Activated CD4-positive, alpha-beta memory T cell treated with anti-CD3 and anti-CD28 coated beads for 36 hours (primary cell): ENCODE measurements at regions of chr1 and their contacts with region 1.

Region 1: DNA sequence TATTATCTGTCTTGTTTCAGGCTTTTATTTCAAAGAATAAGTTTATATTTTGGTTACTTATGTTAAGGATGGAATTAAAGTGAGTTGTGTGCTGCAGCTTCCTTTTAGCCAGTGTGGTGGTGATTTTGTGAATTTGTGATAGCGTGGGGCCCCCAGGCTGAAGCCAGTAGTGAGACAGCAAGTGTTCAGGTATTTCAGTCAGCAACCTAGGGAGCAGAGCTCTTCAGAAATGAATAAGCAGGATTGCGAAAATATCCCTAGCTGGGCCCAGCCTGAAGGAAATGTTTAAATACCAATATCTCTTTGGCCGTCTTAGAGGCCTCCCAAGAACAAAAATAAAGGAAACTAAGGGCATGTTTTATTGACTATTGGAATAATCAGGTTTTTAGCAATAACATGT is 150.8 kb upstream of the C1orf105 start:
- DNase-seq: peak; percentile 41
- H3K4me3 Mint-ChIP-seq: no peak overlapping the region
- H3K27ac Mint-ChIP-seq: peak overlapping the region; percentile 49
- H3K4me1 Mint-ChIP-seq: peaks cover 48% of the 10 kb centered on the region
- H3K27me3 Mint-ChIP-seq: no peaks in the 10 kb centered on the region

Region 2: DNA sequence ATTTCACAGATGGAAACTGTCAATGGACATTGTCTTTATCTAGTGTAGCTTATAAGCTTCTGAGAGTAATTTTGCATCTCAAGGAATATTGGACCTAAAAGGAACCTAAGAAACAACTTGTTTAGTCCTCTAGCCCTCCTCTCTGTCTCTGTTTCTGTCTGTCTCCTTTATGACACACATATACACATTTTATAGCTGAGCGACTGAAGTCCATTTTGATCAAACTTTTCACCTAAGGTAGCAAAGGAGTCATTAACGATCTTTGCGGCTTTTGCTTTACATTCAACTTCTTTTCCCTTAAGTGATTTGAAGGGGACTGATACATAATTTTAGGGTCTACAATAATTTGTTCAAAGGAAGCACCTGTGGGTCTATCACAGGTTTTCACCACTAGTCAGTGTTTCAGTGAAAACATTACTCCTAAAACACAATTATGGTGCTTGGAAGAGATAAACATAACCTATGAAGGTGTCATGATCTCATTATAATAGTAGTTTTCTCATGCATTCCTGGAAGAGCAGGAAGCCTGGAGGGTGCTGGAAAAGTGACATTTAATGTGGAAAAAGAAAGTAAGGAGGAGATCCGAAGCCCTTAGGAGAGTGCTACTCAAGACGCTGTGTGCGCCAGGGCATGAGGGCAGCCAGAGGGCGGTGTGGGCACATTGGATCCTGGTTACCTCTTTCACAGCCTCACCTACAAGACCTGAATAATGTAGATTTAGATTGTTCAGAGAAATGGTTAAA is 179.7 kb before region 1 on chr1:
- CTCF ChIA-PET with region 1: no interaction called
- POLR2A ChIA-PET with region 1: no interaction called
- intact Hi-C with region 1: loop called (anchors 5 kb)
- DNase-seq: peak; percentile 79
- H3K4me3 Mint-ChIP-seq: no peak overlapping the region
- H3K27ac Mint-ChIP-seq: no peak overlapping the region
- H3K4me1 Mint-ChIP-seq: peaks cover 2% of the 10 kb centered on the region
- H3K27me3 Mint-ChIP-seq: no peaks in the 10 kb centered on the region

Region 3: GRCh38 chr1:172135076-172135672 is 134.5 kb before region 1 on chr1:
- CTCF ChIA-PET with region 1: no interaction called
- POLR2A ChIA-PET with region 1: no interaction called
- intact Hi-C with region 1: loop called (anchors 1 kb)
- DNase-seq: no peak
- H3K4me3 Mint-ChIP-seq: no peak overlapping the region
- H3K27ac Mint-ChIP-seq: peak overlapping the region; percentile 29
- H3K4me1 Mint-ChIP-seq: peaks cover 18% of the 10 kb centered on the region
- H3K27me3 Mint-ChIP-seq: no peaks in the 10 kb centered on the region

Region 4: DNA sequence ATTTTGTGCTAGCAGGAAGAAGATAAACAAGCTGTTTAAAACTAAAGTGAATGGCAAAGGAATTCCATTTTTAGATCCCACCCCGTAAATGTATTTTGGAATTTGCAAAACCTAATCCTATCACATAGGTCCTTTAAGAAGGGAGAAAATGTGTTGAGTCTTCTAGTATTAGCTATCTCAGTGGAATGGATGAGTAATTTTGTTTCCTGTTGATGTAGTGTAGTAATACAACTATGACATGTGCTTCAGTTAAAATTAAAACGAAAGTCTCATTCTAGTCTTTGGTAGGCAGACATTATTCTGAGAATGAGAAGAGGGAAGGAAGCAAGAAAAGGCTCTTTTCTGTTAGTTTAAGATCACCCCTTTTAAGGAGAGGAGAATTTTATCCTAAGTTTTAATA is 115.1 kb before region 1 on chr1:
- CTCF ChIA-PET with region 1: no interaction called
- POLR2A ChIA-PET with region 1: no interaction called
- intact Hi-C with region 1: loop called (anchors 1 kb)
- DNase-seq: no peak
- H3K4me3 Mint-ChIP-seq: no peak overlapping the region
- H3K27ac Mint-ChIP-seq: peak overlapping the region; percentile 86
- H3K4me1 Mint-ChIP-seq: peaks cover 14% of the 10 kb centered on the region
- H3K27me3 Mint-ChIP-seq: no peaks in the 10 kb centered on the region